Dendritic cell treated with granulocyte-macrophage colony-stimulating factor and Interleukin-4, amounts not matched to agents 40 ng/mL and 50 ng/mL, for 4 days (primary cell): ENCODE measurements at regions of chr1 and their contacts with region 1.

Region 1: GRCh38 chr1:116570358-116571200 is at the start of gene CD58:
- H3K4me3 Mint-ChIP-seq: peak within 1 kb of the TSS; percentile 79
- H3K27ac Mint-ChIP-seq: peak within 1 kb of the TSS; percentile 95
- H3K4me1 Mint-ChIP-seq: peaks cover 78% of the 10 kb centered on the region
- H3K27me3 Mint-ChIP-seq: no peaks in the 10 kb centered on the region

Region 2: GRCh38 chr1:116504308-116505156 is 66.0 kb before region 1 on chr1:
- intact Hi-C with region 1: loop called (anchors 2 kb)
- H3K4me3 Mint-ChIP-seq: no peak overlapping the region
- H3K27ac Mint-ChIP-seq: peak overlapping the region; percentile 87
- H3K4me1 Mint-ChIP-seq: peaks cover 71% of the 10 kb centered on the region
- H3K27me3 Mint-ChIP-seq: no peaks in the 10 kb centered on the region

Region 3: DNA sequence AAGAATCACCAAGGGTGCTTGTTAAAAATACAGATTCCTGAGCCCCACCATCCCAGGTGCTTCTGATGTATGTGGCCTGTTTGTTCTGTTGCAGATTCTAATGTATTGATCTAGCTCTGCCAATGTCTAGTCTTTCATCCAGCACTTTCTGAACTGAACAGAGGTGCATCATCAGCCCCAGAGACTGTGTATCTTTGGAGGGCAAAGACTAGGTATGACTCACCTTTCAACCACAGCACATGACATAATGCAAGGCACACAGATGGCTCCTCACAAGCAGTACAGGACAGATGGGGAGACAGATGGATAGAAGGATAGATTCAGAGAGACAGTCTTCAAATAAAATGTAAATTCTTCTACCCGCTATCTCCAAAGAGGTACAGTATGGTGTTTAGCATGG is 32.0 kb before region 1 on chr1:
- intact Hi-C with region 1: loop called (anchors 5 kb)
- H3K4me3 Mint-ChIP-seq: no peak overlapping the region
- H3K27ac Mint-ChIP-seq: peak overlapping the region; percentile 77
- H3K4me1 Mint-ChIP-seq: peaks cover 62% of the 10 kb centered on the region
- H3K27me3 Mint-ChIP-seq: no peaks in the 10 kb centered on the region

Region 4: GRCh38 chr1:116667575-116668105 is 97.1 kb after region 1 on chr1 and contains the start of gene IGSF3:
- intact Hi-C with region 1: loop called (anchors 5 kb)
- H3K4me3 Mint-ChIP-seq: peak within 1 kb of the TSS; percentile 66
- H3K27ac Mint-ChIP-seq: peak within 1 kb of the TSS; percentile 14
- H3K4me1 Mint-ChIP-seq: peaks cover 25% of the 10 kb centered on the region
- H3K27me3 Mint-ChIP-seq: peaks cover 57% of the 10 kb centered on the region

Region 5: GRCh38 chr1:116737020-116737854 is 166.7 kb after region 1 on chr1:
- intact Hi-C with region 1: loop called (anchors 5 kb)
- H3K4me3 Mint-ChIP-seq: no peak overlapping the region
- H3K27ac Mint-ChIP-seq: no peak overlapping the region
- H3K4me1 Mint-ChIP-seq: peaks cover 47% of the 10 kb centered on the region
- H3K27me3 Mint-ChIP-seq: no peaks in the 10 kb centered on the region

Region 6: DNA sequence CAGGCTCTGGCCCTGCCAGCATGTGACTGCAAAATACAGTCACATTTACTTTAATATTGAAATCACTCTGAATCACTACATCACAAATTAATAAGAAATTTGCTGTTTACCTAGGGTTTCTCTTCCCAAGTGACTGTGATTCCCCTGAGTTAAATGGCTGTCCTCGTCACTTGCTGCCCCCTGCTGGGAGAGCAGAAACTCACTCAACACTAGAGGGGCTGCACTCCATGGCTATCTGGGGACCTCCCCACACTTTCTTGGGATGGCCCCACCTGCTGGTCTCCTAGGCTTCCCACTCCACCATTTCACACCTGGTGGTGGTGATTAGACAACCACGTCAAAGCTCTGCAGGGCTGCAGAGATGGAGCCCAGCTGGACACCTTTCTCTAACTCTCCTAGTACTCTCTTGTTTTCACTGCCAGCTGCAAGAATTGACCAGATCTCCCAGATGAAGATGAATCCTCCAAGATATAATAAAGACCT is 247.0 kb after region 1 on chr1:
- intact Hi-C with region 1: loop called (anchors 2 kb)
- H3K4me3 Mint-ChIP-seq: no peak overlapping the region
- H3K27ac Mint-ChIP-seq: no peak overlapping the region
- H3K4me1 Mint-ChIP-seq: peaks cover 4% of the 10 kb centered on the region
- H3K27me3 Mint-ChIP-seq: no peaks in the 10 kb centered on the region

Region 7: GRCh38 chr1:117059678-117060440 is 489.3 kb after region 1 on chr1 and contains the start of gene TTF2:
- intact Hi-C with region 1: loop called (anchors 5 kb)
- H3K4me3 Mint-ChIP-seq: no peak within 1 kb of the TSS
- H3K27ac Mint-ChIP-seq: no peak within 1 kb of the TSS
- H3K4me1 Mint-ChIP-seq: peaks cover 15% of the 10 kb centered on the region
- H3K27me3 Mint-ChIP-seq: no peaks in the 10 kb centered on the region